PC-3 (cell line): ENCODE measurements at regions of chrX and their contacts with region 1.

Region 1: DNA sequence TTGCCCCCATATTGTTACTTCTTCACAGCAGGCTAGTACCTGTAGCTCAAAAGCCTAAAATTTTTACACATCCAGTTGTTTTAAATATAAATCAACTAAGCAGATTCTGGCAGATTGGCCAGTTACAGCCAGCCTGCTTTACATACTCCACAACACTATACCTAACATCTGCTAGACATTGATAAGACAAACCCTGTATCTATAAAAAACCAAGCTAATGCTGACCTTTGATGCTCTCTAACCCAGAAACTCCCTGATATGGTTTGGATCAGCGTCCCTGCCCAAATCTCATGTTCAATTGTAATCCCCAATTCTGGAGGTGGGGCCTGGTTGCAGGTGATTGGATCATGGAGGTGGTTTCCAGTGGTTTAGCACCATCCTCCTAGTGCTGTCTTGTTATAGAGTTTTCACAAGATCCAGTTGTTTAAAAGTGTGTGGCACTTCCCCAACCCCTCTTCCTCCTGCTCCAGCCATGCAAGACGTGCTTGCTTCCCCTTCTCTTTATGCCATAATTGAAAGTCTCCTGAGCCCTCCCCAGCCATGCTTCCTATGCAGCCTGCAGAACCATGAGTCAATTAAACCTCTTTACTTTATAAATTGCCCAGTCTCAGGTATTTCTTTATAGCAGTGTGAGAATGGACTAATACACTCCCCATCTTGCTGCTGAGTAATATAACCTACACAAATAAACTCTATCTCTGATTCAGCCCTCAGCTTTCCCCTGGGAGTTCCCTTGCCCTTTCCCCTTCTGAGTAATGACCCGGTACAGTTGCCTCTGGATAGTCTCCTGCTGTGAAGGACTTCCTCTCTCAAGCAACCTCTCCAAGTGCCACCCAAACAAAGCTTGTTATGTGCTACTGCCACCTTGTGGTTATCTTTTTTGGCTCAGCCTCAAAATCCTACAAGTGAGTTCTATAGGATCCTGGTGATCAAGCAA is 39.6 kb downstream of the ZCCHC13 start:
- DNase-seq: peak; percentile 96
- ATAC-seq: peak; percentile 99
- H3K4me3 ChIP-seq: peak overlapping the region; percentile 15; the same call in 1 of the 2 replicates
- H3K27ac ChIP-seq: peak overlapping the region; percentile 89
- H3K4me1 ChIP-seq: peaks cover 8% of the 10 kb centered on the region
- H3K27me3 ChIP-seq: no peaks in the 10 kb centered on the region
- CTCF ChIP-seq: peak; percentile 79

Region 2: GRCh38 chrX:73987166-73987565 is 356.4 kb before region 1 on chrX:
- CTCF ChIA-PET with region 1: no interaction called
- POLR2A ChIA-PET with region 1: interaction called, 12 read pairs
- intact Hi-C with region 1: no loop called
- DNase-seq: no peak
- ATAC-seq: no peak
- H3K4me3 ChIP-seq: no peak overlapping the region
- H3K27ac ChIP-seq: no peak overlapping the region
- H3K4me1 ChIP-seq: no peaks in the 10 kb centered on the region
- H3K27me3 ChIP-seq: no peaks in the 10 kb centered on the region
- CTCF ChIP-seq: no peak

Region 3: DNA sequence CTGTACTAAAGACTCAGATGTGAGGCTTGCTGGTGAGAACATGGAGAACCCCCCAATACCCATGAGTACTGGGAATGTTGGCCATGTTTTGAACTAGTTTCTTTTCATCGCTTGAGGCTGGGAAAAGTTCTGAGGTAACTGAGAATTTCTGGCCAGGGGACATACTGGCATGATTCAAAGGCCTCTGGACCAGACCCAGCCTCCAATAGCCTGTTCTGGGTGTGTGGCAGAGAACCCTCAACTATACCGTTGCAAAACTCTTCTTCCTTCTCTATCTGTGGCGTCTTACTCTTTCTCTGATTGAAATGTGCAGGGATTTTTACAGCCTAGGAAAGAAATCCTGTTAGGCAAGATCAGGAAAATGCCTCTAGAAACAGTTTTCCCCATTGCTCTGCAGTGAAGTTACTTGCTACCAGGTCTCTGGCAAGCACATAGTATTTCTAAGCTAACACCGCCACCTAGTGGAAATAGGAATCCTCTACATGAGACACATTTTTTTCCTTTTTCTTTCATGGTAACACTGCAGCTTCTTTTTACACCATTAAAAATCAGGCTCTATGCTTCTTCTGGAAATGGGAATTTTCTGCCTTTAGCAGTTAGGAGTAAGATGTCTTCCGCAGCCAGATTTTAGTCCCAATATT is 210.3 kb before region 1 on chrX:
- CTCF ChIA-PET with region 1: interaction called, 3 read pairs
- POLR2A ChIA-PET with region 1: no interaction called
- intact Hi-C with region 1: loop called (anchors 1 kb)
- DNase-seq: peak; percentile 76
- ATAC-seq: peak; percentile 76
- H3K4me3 ChIP-seq: no peak overlapping the region
- H3K27ac ChIP-seq: no peak overlapping the region
- H3K4me1 ChIP-seq: no peaks in the 10 kb centered on the region
- H3K27me3 ChIP-seq: no peaks in the 10 kb centered on the region
- CTCF ChIP-seq: peak; percentile 73

Region 4: DNA sequence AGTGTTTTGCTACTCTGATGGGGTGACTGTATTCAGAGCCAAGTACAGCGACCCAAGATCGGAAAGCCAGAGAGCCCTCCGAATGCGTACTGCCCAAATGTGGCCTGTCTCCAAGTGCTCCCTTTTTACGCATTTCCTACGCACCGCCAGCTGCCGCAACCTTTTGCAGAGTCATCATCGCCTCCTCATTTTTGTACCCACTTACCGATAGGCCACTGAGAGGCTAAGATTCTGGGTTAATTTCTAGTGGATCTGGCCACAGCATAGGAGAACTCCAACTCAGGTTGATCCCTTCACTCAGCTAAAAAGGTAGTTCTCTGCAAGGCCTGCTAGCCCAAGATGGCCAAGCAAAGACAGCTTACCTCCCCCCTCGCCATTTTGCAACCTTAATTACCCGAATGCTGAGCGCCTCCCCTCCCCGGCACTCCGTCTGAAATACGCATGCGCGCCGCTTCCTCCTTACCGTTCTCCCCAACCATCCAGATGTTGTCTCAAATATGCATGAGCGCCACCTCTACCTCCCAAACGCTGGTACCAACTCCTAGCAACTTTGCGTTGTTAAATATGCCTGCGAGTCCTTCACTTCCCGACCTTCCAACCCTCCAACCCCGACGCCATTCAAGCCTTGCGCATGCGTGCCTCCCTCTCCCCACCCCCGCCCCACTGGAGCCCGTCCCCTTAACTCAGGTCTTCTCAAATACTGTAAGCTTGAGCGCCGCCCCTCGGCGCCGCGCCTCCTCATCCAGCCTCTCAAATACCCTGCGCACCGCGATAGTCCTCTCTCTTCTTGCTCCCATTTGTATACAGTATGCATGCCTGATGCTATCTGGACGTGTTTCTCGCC is 51.4 kb before region 1 on chrX:
- CTCF ChIA-PET with region 1: no interaction called
- POLR2A ChIA-PET with region 1: interaction called, 12 read pairs
- intact Hi-C with region 1: loop called (anchors 1 kb)
- DNase-seq: peak; percentile 85
- ATAC-seq: peak; percentile 92
- H3K4me3 ChIP-seq: peak overlapping the region; percentile 98
- H3K27ac ChIP-seq: peak overlapping the region; percentile 98
- H3K4me1 ChIP-seq: no peaks in the 10 kb centered on the region
- H3K27me3 ChIP-seq: no peaks in the 10 kb centered on the region
- CTCF ChIP-seq: peak; percentile 42; the same call in 1 of the 2 replicates